ENCODE measurements at regions of chr1 and their contacts with region 1.

Region 1: GRCh38 chr1:79955966-79956365 is 949.4 kb upstream of the ADGRL4 start:
- DNase-seq: no peak
- H3K4me3 ChIP-seq: no peak overlapping the region
- H3K27ac ChIP-seq: no peak overlapping the region
- H3K4me1 ChIP-seq: no peaks in the 10 kb centered on the region
- H3K27me3 ChIP-seq: no peaks in the 10 kb centered on the region
- CTCF ChIP-seq: no peak
- POLR2A ChIP-seq: no peak

Region 2: DNA sequence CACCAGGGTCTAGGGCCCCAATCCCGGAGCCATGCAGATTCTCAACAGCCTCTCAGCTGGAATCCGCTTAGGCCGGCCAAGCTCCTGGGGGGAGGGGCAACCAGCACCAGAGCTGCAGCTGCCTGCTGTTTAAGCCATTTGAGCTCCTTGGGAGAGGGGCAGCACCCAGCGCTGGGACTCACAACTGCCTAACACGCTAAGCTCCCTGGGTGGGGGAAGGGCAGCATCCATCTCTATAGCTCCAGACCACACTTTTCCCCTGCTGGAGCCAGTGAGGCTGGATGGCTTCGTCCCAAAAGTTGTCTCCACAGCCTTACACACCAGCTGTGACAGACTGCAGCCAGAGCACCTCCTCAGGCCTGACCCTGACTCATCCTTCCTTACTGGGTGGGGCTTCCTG is 1472.1 kb before region 1 on chr1:
- intact Hi-C with region 1: no loop called
- DNase-seq: no peak
- H3K4me3 ChIP-seq: no peak overlapping the region
- H3K27ac ChIP-seq: no peak overlapping the region
- H3K4me1 ChIP-seq: no peaks in the 10 kb centered on the region
- H3K27me3 ChIP-seq: no peaks in the 10 kb centered on the region
- CTCF ChIP-seq: no peak
- POLR2A ChIP-seq: no peak

Region 3: GRCh38 chr1:79539001-79539400 is 417.0 kb before region 1 on chr1:
- intact Hi-C with region 1: loop called (anchors 5 kb)
- DNase-seq: no peak
- H3K4me3 ChIP-seq: no peak overlapping the region
- H3K27ac ChIP-seq: no peak overlapping the region
- H3K4me1 ChIP-seq: no peaks in the 10 kb centered on the region
- H3K27me3 ChIP-seq: no peaks in the 10 kb centered on the region
- CTCF ChIP-seq: no peak
- POLR2A ChIP-seq: no peak

Region 4: DNA sequence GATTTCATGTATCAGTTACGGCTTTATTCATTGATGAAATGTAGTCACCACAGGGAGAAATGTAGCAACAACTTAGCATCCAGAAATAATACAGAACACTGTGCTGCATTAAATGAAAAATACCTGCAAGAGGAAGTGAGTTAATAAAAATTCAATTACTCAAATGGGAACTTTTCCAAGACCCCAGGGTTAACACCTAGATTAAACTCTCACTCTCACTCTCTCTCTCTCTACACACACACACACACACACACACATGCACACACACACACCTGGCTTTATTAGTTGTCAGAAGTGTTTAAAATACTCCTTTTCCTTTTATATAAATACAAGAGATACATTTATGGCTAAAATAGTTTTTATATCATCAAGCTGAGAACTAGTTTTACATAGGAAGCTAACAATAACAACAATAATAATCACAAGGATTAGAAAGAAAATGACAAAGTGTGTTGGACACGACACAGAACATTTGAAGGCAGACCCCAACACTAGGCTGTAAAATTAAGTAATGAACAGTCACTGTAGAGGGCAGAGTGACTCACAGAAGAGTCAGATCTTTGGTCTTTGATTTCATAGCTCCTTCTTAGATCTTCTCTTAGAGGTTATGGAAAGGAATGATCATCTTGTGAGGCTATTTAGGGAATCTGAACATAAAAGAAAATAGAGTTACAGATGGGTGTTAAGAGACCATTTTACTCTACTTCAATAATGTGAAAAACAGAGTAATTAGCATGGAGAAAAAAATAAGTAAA is 578.8 kb after region 1 on chr1:
- intact Hi-C with region 1: loop called (anchors 10 kb)
- DNase-seq: no peak
- H3K4me3 ChIP-seq: no peak overlapping the region
- H3K27ac ChIP-seq: peak overlapping the region; percentile 9 to 40
- H3K4me1 ChIP-seq: peaks cover 0 to 4% of the 10 kb centered on the region in 2 donors
- H3K27me3 ChIP-seq: no peaks in the 10 kb centered on the region
- CTCF ChIP-seq: no peak
- POLR2A ChIP-seq: no peak

Measured in breast epithelium (tissue), 4 donors.